ENCODE measurements at regions of chr16 and their contacts with region 1.

Region 1: DNA sequence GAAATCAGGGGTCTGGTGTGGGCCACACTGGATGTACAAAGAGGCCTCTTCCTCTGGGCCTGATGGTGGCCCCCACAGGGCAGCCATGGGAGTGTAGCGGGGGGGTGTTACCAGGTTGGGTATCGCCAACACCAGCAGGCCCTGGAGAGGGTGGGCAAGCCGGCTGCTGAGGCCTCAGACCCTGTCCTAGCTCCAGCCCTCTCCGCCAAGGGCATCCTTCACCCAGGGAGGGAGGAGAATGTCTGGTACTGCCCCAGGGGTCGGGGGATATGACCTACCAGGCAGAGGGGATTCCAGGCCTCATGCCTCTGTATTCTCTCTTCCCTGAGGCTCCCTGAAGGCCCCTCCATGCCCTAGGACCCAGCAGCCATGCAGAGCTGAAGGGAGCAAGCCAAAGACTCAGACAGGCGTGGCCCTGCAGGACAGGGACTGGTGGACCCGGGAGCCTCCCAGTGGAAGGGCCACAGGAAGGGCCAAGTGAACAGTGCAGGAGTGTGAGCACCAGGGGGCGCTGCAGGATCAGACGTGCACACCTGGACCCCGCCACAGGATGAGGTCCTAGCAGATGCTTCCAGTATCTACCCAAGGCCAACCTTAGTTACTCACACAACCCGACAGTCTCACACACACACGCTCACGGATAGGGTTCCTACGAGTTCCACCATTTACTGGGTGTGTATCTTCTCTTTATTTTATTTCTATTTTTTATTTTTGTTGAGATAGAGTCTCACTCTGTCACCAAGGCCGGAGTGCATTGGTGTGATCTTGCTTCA is 10.9 kb upstream of the CES4A start:
- DNase-seq: peak; percentile 93
- ATAC-seq: peak; percentile 98

Region 2: GRCh38 chr16:67159593-67160406 is 182.3 kb after region 1 on chr16 and contains the starts of genes FBXL8 and TRADD:
- intact Hi-C with region 1: loop called (anchors 5 kb)
- DNase-seq: peak; percentile 88
- ATAC-seq: peak; percentile 66
- total RNA-seq, gene FBXL8: 12.0 TPM
- total RNA-seq, gene TRADD: 7.2 TPM

Measured in left ventricle myocardium superior (tissue), 1 donor.